ENCODE measurements at regions of chr19 and their contacts with region 1.

Region 1: DNA sequence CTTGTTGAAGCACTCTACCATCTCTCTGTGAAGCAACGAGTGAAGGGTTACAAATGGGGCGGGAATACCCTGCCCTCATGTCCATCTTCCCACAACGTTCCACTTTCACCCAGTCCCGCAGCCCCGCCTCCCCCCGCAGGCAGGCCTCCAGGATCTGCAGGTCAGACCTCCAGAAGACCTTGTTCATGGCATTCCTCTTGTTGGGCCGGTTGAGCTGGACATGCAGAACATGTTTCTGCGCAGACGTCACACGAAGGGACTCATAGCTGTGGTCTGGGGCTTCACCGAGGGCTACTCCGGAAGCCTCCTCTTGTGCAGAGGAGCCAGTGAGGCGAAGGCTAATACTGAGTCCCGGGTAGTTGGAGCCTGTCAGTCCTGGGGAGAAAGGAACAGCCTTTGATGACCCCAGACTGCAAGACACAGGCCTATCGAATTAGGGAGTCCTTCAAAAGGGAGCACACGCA is 420 bp downstream of the ECH1 start:
- DNase-seq: peak in 6 of 10 donors; percentile 15 to 59 (median 36)
- H3K4me3 ChIP-seq: peak overlapping the region; percentile 61 to 96 (median 85)
- H3K27ac ChIP-seq: peak overlapping the region; percentile 53 to 98 (median 91)
- H3K27me3 ChIP-seq: no peaks in the 10 kb centered on the region
- CTCF ChIP-seq: no peak

Region 2: GRCh38 chr19:38402967-38403861 is 428.0 kb before region 1 on chr19 and contains the start of gene FAM98C:
- intact Hi-C with region 1: loop called in 1 of 2 experiments (anchors 5 kb)
- DNase-seq: peak; percentile 89 to 97 (median 96)
- H3K4me3 ChIP-seq: peak within 1 kb of the TSS; percentile 57 to 99 (median 91)
- H3K27ac ChIP-seq: peak within 1 kb of the TSS; percentile 20 to 97 (median 89)
- H3K27me3 ChIP-seq: no peaks in the 10 kb centered on the region
- CTCF ChIP-seq: peak; percentile 95 to 100 (median 100)
- total RNA-seq, gene FAM98C: 31.5 to 65.9 (median 44.2) TPM

Region 3: DNA sequence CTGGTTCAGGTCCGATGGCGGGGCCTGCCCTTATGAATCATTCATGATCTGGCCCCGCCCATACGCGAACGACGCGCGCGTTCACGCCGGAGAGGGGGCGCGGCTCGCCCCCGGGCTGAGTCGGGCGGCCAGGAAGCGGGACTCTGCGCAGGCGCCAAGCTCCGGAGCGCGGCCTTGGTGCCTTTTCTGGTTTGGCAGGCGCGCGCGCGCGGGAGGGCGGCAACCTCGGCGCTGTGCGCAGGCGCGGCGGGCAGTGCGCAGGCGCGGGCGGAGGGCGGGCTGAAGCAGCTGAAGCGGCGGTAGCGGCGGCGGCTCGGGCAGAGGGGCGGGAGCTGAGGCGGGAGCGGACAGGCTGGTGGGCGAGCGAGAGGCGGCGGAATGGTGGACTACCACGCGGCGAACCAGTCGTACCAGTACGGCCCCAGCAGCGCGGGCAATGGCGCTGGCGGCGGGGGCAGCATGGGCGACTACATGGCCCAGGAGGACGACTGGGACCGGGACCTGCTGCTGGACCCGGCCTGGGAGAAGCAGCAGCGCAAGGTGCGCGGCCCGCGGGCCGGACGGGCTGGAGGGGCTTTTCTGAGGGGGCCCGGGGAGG is 183.7 kb before region 1 on chr19 and contains the start of gene ACTN4:
- intact Hi-C with region 1: loop called in 1 of 2 experiments (anchors 5 kb)
- DNase-seq: peak; percentile 95 to 99 (median 98)
- H3K4me3 ChIP-seq: peak within 1 kb of the TSS; percentile 57 to 96 (median 89)
- H3K27ac ChIP-seq: peak within 1 kb of the TSS; percentile 15 to 97 (median 85)
- H3K27me3 ChIP-seq: no peaks in the 10 kb centered on the region
- CTCF ChIP-seq: peak in 26 of 56 donors; percentile 5 to 55 (median 24)
- total RNA-seq, gene ACTN4: 271 to 539 (median 377) TPM

Region 4: GRCh38 chr19:38707512-38708114 is 123.6 kb before region 1 on chr19:
- intact Hi-C with region 1: no loop called
- DNase-seq: no peak
- H3K4me3 ChIP-seq: no peak overlapping the region
- H3K27ac ChIP-seq: peak overlapping the region; percentile 51 to 99 (median 89)
- H3K27me3 ChIP-seq: no peaks in the 10 kb centered on the region
- CTCF ChIP-seq: no peak

Region 5: GRCh38 chr19:38718747-38719543 is 112.2 kb before region 1 on chr19:
- intact Hi-C with region 1: no loop called
- DNase-seq: peak; percentile 46 to 85 (median 77)
- H3K4me3 ChIP-seq: peak overlapping the region in 1 of 59 donors; percentile 12
- H3K27ac ChIP-seq: peak overlapping the region; percentile 89 to 100 (median 97)
- H3K27me3 ChIP-seq: no peaks in the 10 kb centered on the region
- CTCF ChIP-seq: peak in 50 of 56 donors; percentile 8 to 59 (median 41)

Region 6: DNA sequence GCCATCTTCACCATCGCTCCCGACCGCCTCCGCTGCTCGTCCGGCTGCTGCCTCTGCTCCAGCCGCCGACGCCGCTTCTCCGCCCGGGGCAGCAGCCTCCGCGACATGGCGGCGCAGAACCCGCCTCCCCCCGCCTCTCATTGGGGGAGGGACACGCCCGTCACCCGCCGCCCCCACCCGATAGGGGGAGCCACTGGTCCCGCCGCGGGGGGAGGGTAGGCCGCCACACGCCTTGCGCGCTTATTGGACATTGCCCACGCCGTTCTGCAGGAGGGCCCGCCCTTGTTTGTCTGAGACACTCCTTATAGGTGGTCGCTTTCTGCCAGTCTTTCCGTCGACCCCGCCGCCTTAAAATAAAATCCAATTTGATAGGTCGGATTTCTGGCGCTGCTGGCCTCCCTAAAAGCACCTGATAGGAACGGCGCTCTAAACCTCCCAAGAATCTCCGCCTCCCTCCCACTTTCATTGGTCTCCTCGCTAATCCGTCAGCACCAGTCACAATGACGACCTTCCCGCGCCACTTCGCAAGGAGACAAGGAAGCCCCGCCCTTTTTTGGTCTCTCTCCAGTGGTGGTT is 18.8 kb after region 1 on chr19 and contains the start of gene HNRNPL:
- intact Hi-C with region 1: loop called (anchors 1 to 2 kb)
- DNase-seq: peak in 8 of 10 donors; percentile 98 to 100 (median 100)
- H3K4me3 ChIP-seq: peak within 1 kb of the TSS; percentile 65 to 100 (median 92)
- H3K27ac ChIP-seq: peak within 1 kb of the TSS; percentile 97 to 100 (median 100)
- H3K27me3 ChIP-seq: no peaks in the 10 kb centered on the region
- CTCF ChIP-seq: peak in 54 of 56 donors; percentile 27 to 73 (median 50)
- total RNA-seq, gene HNRNPL: 179 to 311 (median 224) TPM

Region 7: DNA sequence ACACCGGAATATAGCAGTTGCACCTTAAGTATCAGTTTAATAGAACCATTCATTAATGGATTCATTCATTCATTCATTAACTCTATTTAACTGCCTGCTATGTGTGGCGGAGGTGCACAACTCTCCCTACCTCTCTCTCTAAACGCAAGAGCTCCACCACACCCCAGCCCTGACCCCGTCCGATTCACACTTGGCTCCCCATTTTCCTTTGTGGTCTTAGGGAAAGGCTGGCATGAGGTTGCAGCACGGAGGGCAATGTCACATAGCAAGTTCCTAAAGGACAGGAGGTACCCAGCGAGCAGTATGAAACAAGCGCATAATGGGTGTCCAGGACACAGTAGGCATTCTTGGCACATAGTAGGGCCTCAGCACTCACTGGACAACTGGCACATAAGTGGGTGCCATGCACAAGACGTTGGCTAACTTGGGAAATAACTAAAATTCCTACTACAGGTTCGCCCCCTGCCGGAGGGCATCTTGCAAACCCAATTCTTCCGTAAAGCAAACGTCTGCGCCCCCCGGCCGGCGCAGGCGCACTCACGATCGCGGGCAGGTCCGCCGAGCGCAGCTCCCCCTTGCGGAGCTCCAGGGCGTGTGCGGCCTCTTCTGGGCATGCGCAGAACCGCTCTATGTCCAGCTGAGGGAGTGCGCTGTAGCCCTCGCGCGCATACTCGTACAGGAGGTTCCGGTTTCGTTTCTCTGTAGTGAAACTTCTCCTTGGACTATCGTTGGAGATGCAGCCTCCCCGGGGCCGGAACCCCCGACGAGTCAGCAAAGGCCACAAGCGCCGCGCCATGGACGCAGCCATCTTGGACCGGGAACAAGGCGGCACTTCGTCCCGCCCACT is 99.0 kb after region 1 on chr19 and contains the start of gene SARS2:
- intact Hi-C with region 1: loop called in 1 of 2 experiments (anchors 5 kb)
- DNase-seq: peak; percentile 83 to 94 (median 90)
- H3K4me3 ChIP-seq: peak within 1 kb of the TSS; percentile 60 to 99 (median 83)
- H3K27ac ChIP-seq: peak within 1 kb of the TSS; percentile 76 to 99 (median 96)
- H3K27me3 ChIP-seq: no peaks in the 10 kb centered on the region
- CTCF ChIP-seq: peak; percentile 98 to 100 (median 100)
- total RNA-seq, gene SARS2: 17.7 to 57.8 (median 28.6) TPM

Measured in dorsolateral prefrontal cortex (tissue), 120 donors.